Prostate gland (tissue), 2 donors: ENCODE measurements at regions of chr14 and their contacts with region 1.

Region 1: GRCh38 chr14:63940387-63940786 is 87.6 kb downstream of the SYNE2 start:
- DNase-seq: no peak
- H3K4me3 ChIP-seq: no peak overlapping the region
- H3K27ac ChIP-seq: no peak overlapping the region
- H3K4me1 ChIP-seq: no peaks in the 10 kb centered on the region
- H3K27me3 ChIP-seq: no peaks in the 10 kb centered on the region
- CTCF ChIP-seq: no peak
- POLR2A ChIP-seq: no peak

Region 2: GRCh38 chr14:63918411-63918810 is 22.0 kb before region 1 on chr14:
- intact Hi-C with region 1: loop called (anchors 2 kb)
- DNase-seq: no peak
- H3K4me3 ChIP-seq: no peak overlapping the region
- H3K27ac ChIP-seq: no peak overlapping the region
- H3K4me1 ChIP-seq: peaks cover 8% of the 10 kb centered on the region
- H3K27me3 ChIP-seq: no peaks in the 10 kb centered on the region
- CTCF ChIP-seq: no peak
- POLR2A ChIP-seq: no peak